ENCODE measurements at regions of chr2 and their contacts with region 1.

Region 1: GRCh38 chr2:62787386-62787785 is 81.9 kb downstream of the EHBP1 start:
- DNase-seq: no peak
- ATAC-seq: peak; percentile 82
- H3K4me3 ChIP-seq: no peak overlapping the region
- H3K27ac ChIP-seq: no peak overlapping the region
- H3K4me1 ChIP-seq: peaks cover 47 to 66% of the 10 kb centered on the region in 2 experiments
- H3K27me3 ChIP-seq: no peaks in the 10 kb centered on the region
- CTCF ChIP-seq: peak in 2 of 3 experiments; percentile 32 to 42; a peak in 3 of 6 replicates
- POLR2A ChIP-seq: no peak
- RAD21 ChIP-seq: peak; percentile 74

Region 2: DNA sequence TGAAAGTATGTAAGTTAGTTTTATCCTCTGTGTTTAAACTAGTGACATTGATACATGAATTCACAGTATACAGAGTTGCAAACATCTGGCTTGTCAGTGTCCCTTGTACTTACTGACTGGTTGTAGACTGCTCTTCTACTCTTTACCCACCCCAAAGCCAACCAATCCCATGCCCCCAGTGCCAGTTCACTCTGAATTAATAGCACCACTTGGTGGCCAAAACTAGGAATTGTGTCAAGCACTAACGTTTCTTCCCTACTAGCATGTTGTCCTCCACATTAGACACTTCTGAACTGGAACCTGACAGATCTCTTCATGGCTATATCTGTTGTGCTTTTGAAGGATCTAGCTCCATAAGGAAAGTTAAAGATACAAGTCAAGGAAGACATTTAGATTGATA is 236.1 kb after region 1 on chr2:
- CTCF ChIA-PET with region 1: interaction called, 4 read pairs
- POLR2A ChIA-PET with region 1: no interaction called
- RAD21 ChIA-PET with region 1: no interaction called
- intact Hi-C with region 1: loop called (anchors 1 kb)
- DNase-seq: peak; percentile 54
- ATAC-seq: peak; percentile 96
- H3K4me3 ChIP-seq: no peak overlapping the region
- H3K27ac ChIP-seq: no peak overlapping the region
- H3K4me1 ChIP-seq: no peaks in the 10 kb centered on the region; a peak in 1 of 4 replicates
- H3K27me3 ChIP-seq: no peaks in the 10 kb centered on the region
- CTCF ChIP-seq: peak; percentile 40 to 69 (median 53); a peak in 5 of 6 replicates
- POLR2A ChIP-seq: no peak
- RAD21 ChIP-seq: peak; percentile 70

Region 3: GRCh38 chr2:63189026-63189425 is 401.6 kb after region 1 on chr2:
- CTCF ChIA-PET with region 1: no interaction called
- POLR2A ChIA-PET with region 1: no interaction called
- RAD21 ChIA-PET with region 1: interaction called in 1 of 2 experiments, 4 read pairs
- intact Hi-C with region 1: loop called (anchors 2 kb)
- DNase-seq: peak; percentile 54
- ATAC-seq: peak; percentile 100
- H3K4me3 ChIP-seq: no peak overlapping the region
- H3K27ac ChIP-seq: no peak overlapping the region
- H3K4me1 ChIP-seq: no peaks in the 10 kb centered on the region
- H3K27me3 ChIP-seq: no peaks in the 10 kb centered on the region
- CTCF ChIP-seq: peak; percentile 54 to 95 (median 94); a peak in 5 of 6 replicates
- POLR2A ChIP-seq: no peak
- RAD21 ChIP-seq: peak; percentile 87

Region 4: DNA sequence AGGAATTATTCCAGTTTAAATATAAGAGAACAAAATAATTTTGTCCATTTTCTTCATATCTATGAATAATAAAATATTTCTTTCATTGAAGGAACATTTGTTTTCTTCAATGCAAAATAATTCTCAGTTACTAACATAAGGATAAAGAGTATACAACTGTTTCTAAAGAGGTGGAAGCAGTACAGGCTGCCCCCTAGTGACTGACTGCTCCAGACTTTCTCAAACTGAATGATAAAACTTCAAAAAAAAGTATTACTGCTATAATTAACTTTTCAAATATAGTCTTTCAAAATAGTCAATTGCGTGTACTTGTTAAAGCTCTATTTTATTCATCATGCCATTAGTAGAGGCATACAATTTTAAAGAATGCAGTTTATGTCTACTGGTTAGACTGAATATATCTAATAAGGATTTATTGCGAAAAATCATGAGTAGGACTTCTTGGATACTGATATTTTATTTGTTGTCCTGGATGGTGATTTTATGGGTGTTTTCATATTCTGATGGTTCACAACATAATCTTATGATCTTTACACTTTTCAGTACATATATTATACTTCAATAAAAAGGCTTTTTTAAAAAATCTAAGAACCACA is 700.8 kb after region 1 on chr2:
- CTCF ChIA-PET with region 1: interaction called, 8 read pairs
- POLR2A ChIA-PET with region 1: no interaction called
- RAD21 ChIA-PET with region 1: no interaction called
- intact Hi-C with region 1: loop called (anchors 5 kb)
- DNase-seq: peak; percentile 15
- ATAC-seq: 0 out of 2 replicates have a peak, but pooled peaks have one; percentile 62
- H3K4me3 ChIP-seq: no peak overlapping the region
- H3K27ac ChIP-seq: no peak overlapping the region
- H3K4me1 ChIP-seq: no peaks in the 10 kb centered on the region
- H3K27me3 ChIP-seq: no peaks in the 10 kb centered on the region
- CTCF ChIP-seq: peak; percentile 41 to 76 (median 72); a peak in 5 of 6 replicates
- POLR2A ChIP-seq: no peak
- RAD21 ChIP-seq: peak; percentile 56

Region 5: GRCh38 chr2:63544017-63544627 is 756.7 kb after region 1 on chr2:
- CTCF ChIA-PET with region 1: no interaction called
- POLR2A ChIA-PET with region 1: no interaction called
- RAD21 ChIA-PET with region 1: no interaction called
- intact Hi-C with region 1: loop called (anchors 2 kb)
- DNase-seq: no peak
- ATAC-seq: no peak
- H3K4me3 ChIP-seq: no peak overlapping the region
- H3K27ac ChIP-seq: no peak overlapping the region
- H3K4me1 ChIP-seq: peaks cover 0 to 4% of the 10 kb centered on the region in 2 experiments; a peak in 1 of 4 replicates
- H3K27me3 ChIP-seq: no peaks in the 10 kb centered on the region
- CTCF ChIP-seq: peak; percentile 24 to 73 (median 57); a peak in 5 of 6 replicates
- POLR2A ChIP-seq: no peak
- RAD21 ChIP-seq: peak; percentile 56